Tibial artery (tissue), 4 donors: ENCODE measurements at regions of chr11 and their contacts with region 1.

Region 1: GRCh38 chr11:118401151-118401878 is at the start of gene ATP5MG:
- DNase-seq: peak; percentile 85 to 93
- H3K4me3 ChIP-seq: peak within 1 kb of the TSS; percentile 77 to 88
- H3K27ac ChIP-seq: peak within 1 kb of the TSS; percentile 83 to 86
- H3K4me1 ChIP-seq: peaks cover 0 to 28% (median 21%) of the 10 kb centered on the region in 4 donors
- H3K27me3 ChIP-seq: no peaks in the 10 kb centered on the region
- CTCF ChIP-seq: no peak

Region 2: GRCh38 chr11:118435893-118436624 is 34.7 kb after region 1 on chr11 and contains the start of gene KMT2A:
- intact Hi-C with region 1: loop called (anchors 5 kb)
- DNase-seq: peak; percentile 96 to 99
- H3K4me3 ChIP-seq: peak within 1 kb of the TSS; percentile 83 to 96
- H3K27ac ChIP-seq: peak within 1 kb of the TSS; percentile 96 to 99
- H3K4me1 ChIP-seq: peaks cover 0 to 43% (median 38%) of the 10 kb centered on the region in 4 donors
- H3K27me3 ChIP-seq: no peaks in the 10 kb centered on the region
- CTCF ChIP-seq: peak in 1 of 2 experiments; percentile 98

Region 3: DNA sequence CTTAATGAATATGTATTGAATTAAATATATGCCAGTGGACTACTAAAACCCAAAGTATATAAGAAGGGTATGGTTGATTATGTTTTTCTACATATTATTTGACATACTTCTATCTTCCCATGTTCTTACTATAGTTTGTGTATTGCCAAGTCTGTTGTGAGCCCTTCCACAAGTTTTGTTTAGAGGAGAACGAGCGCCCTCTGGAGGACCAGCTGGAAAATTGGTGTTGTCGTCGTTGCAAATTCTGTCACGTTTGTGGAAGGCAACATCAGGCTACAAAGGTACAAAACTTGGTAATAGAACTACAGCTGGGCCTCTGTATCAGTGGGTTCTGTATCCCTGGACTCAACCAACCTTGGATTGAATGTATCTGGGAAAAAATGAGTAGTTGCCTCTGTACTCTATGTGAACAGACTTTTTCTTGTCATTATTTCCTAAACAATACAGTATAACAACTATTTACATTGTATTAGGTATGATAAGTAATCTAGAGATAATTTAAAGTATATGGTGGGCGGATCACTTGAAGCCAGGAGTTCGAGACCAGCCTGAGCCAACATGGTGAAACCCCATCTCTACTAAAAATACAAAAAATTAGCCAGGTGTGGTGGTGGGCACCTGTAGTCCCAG is 87.3 kb after region 1 on chr11:
- intact Hi-C with region 1: loop called (anchors 5 kb)
- DNase-seq: peak in 1 of 2 donors; percentile 73
- H3K4me3 ChIP-seq: no peak overlapping the region
- H3K27ac ChIP-seq: no peak overlapping the region
- H3K4me1 ChIP-seq: no peaks in the 10 kb centered on the region
- H3K27me3 ChIP-seq: no peaks in the 10 kb centered on the region
- CTCF ChIP-seq: peak; percentile 73 to 76

Region 4: GRCh38 chr11:118581057-118581456 is 179.7 kb after region 1 on chr11:
- intact Hi-C with region 1: no loop called
- DNase-seq: no peak
- H3K4me3 ChIP-seq: no peak overlapping the region
- H3K27ac ChIP-seq: no peak overlapping the region
- H3K4me1 ChIP-seq: peaks cover 0 to 44% (median 11%) of the 10 kb centered on the region in 4 donors
- H3K27me3 ChIP-seq: no peaks in the 10 kb centered on the region
- CTCF ChIP-seq: no peak